WTC11 (cell line): ENCODE measurements at regions of chr1 and their contacts with region 1.

Region 1: DNA sequence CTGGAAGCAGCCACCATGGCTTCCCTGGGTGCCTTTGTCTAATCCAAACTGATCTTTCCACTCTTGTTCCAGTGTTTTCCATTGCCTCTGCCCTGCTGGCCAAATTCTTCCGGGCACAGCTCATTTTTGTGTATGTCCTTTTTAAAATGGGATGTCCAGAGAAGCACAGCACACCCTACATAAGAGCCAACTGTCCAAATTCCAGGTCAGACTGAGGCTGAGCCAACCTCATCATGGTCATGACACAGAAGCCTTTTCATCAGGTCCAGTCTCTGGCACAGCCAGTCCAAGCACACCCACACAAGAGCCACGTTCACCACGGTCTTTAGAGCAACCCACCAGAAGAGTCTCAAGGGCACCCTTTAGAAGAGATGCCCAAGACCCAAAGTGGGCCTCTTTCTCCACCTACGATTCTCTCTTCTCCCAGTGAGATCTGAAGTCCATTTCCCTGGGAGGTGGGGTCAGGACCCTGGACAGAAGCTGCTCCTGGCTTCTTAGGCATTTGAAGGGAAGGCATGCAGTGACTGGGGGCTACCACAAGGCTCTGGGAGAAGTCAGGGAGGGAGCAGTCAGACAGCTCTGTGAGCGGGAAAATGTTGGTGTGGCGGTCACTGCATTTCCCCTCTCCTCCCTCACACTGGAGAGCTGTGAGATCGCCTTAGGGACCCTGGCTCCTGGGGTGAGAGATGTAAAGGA is 53.2 kb downstream of the SYT2 start:
- DNase-seq: peak; percentile 85
- ATAC-seq: peak; percentile 90
- H3K4me3 Mint-ChIP-seq: no peak overlapping the region
- H3K27ac Mint-ChIP-seq: no peak overlapping the region
- H3K4me1 Mint-ChIP-seq: peaks cover 9% of the 10 kb centered on the region; the same call in 1 of the 2 replicates
- H3K27me3 Mint-ChIP-seq: no peaks in the 10 kb centered on the region
- CTCF ChIP-seq: no peak

Region 2: DNA sequence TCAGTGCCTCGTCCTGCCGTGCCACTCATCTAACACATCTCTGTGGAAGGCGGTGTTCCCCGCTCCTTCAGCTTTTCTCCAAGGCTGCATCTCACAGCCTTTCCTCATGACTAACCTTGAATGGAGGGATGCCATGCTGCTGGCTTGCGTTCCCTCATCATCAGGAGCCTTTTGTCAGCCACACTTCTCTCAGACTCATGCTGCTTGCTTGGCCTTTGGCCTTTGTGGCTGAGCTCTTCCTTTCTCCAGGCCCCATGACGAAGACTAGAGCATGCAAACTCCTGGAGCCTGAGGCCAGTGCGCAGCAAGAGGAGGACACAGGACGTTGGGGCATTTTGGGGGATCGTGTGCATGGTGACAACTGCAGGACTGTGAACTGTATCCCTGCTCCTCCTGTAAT is 17.6 kb before region 1 on chr1:
- CTCF ChIA-PET with region 1: interaction called, 10 read pairs
- POLR2A ChIA-PET with region 1: interaction called, 3 read pairs
- DNase-seq: no peak
- ATAC-seq: no peak
- H3K4me3 Mint-ChIP-seq: no peak overlapping the region
- H3K27ac Mint-ChIP-seq: no peak overlapping the region
- H3K4me1 Mint-ChIP-seq: peaks cover 50% of the 10 kb centered on the region
- H3K27me3 Mint-ChIP-seq: peaks cover 27% of the 10 kb centered on the region
- CTCF ChIP-seq: no peak

Region 3: DNA sequence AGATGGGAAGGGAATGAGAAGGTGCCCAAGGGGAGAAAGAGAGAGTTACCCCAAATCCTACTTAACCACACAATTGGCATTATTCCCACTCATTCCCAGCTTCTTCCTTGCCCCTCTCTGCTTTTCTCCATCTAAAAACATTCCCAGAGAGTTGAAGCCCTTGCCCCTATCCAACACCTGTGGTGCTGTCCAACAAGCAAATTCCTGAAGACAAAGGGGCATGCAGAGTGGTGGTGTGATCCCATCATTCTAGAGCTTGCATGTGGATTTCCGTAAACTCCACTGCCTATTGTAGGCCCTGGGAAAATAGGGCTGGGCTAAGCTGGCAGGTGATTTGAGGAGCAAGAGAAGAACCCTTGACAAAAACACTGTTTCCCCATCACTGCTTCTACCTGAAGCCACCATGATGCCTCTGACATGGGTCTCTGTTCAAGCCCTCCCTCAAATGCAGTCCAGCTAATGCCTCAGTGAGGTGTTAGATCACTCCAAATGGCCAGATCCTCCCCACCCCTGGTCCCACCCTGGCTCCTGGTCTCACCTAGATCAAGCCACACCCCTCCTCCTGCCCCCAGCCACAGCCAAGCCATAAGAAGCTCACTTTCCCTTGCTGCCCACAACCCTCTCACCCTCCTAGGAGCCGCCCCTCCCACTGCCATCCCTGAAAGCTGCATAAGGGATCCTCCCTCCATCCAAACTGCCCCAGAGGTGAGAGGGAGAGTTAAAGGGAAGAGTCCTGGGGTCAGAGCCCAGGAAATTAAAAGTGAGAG is 23.7 kb after region 1 on chr1:
- CTCF ChIA-PET with region 1: interaction called, 37 read pairs
- POLR2A ChIA-PET with region 1: no interaction called
- DNase-seq: peak; percentile 54
- ATAC-seq: peak; percentile 89
- H3K4me3 Mint-ChIP-seq: no peak overlapping the region
- H3K27ac Mint-ChIP-seq: no peak overlapping the region
- H3K4me1 Mint-ChIP-seq: peaks cover 14% of the 10 kb centered on the region
- H3K27me3 Mint-ChIP-seq: no peaks in the 10 kb centered on the region; the same call in 1 of the 2 replicates
- CTCF ChIP-seq: no peak

Region 4: DNA sequence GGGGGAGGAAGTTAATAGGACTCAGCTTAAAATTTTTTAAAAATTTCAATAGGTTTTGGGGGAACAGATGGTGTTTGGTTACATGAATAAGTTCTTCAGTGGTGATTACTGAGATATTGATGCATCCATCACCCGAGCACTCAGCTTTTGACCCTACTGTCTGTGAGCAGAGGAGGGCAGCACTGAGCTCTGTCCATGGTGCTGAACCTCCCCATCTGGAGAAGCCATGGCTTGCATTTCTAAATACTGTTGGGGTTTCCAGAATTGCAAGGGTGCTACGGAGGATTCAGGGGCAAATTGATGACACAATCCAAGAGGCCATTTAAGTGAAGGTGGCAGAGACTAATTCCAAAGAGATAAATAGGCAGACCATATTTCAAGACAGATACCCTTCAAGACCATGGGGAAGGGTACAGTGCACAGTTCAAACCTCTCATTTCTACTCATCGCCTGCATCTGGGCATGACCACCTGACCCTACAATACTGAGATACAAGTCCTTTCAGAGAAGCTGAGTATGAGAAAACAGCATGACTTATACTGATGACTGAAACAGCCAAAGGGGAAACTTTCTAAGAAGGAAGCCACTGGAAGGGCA is 36.0 kb after region 1 on chr1:
- CTCF ChIA-PET with region 1: interaction called, 14 read pairs
- POLR2A ChIA-PET with region 1: no interaction called
- DNase-seq: peak; percentile 90
- ATAC-seq: peak; percentile 81
- H3K4me3 Mint-ChIP-seq: no peak overlapping the region
- H3K27ac Mint-ChIP-seq: no peak overlapping the region
- H3K4me1 Mint-ChIP-seq: peaks cover 5% of the 10 kb centered on the region; the same call in 1 of the 2 replicates
- H3K27me3 Mint-ChIP-seq: no peaks in the 10 kb centered on the region
- CTCF ChIP-seq: no peak

Region 5: GRCh38 chr1:202710070-202711045 is 53.3 kb after region 1 on chr1 and contains the start of gene SYT2:
- CTCF ChIA-PET with region 1: interaction called, 150 read pairs
- POLR2A ChIA-PET with region 1: no interaction called
- DNase-seq: peak; percentile 78
- ATAC-seq: peak; percentile 41
- H3K4me3 Mint-ChIP-seq: peak within 1 kb of the TSS; percentile 77
- H3K27ac Mint-ChIP-seq: no peak within 1 kb of the TSS
- H3K4me1 Mint-ChIP-seq: peaks cover 36% of the 10 kb centered on the region
- H3K27me3 Mint-ChIP-seq: peaks cover 31% of the 10 kb centered on the region
- CTCF ChIP-seq: no peak
- total RNA-seq, gene SYT2: 9.5 to 12.1 TPM (median 9.6 TPM) in 3 replicates